Activated CD4-positive, alpha-beta T cell treated with anti-CD3 and anti-CD28 coated beads, Interleukin-2, amount 10 ng/mL, durations not matched to agents 24 days and 14 days (primary cell): ENCODE measurements at regions of chr9 and their contacts with region 1.

Region 1: DNA sequence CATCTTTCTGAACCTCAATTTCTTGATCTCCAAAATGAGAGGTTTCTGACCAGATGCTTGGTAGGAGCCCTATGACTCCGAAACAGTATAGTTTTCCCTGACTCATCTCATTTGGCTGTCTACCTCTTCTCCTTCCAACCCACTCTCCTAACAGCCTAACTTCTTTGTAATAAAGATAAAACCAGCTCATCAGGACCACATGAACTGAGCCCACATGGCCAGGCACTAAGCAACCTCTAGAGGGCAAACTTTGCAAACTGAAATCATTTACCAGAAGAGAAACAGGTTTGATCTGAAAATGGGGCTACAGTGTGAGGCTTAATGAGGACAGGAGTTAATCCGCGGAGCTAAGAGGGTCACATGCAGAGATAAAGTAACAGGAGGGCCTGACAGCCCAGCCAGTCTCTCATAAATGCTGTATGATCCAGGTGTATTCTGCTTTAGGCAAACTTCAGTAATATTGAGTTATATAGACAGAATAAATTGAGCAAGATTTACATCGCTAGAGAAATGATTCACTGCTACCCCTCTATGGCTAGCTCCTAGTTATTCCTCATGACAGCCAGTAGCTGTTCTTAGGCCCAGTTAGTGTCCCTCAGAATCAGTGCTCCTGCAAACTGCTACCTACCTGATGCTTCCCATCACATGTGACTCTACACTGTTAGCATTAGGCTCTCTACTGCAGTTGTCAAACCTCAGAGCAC is 64.6 kb downstream of the ABCA1 start:
- DNase-seq: peak; percentile 83
- H3K4me3 Mint-ChIP-seq: no peak overlapping the region
- H3K27ac Mint-ChIP-seq: no peak overlapping the region
- H3K4me1 Mint-ChIP-seq: peaks cover 4% of the 10 kb centered on the region
- H3K27me3 Mint-ChIP-seq: no peaks in the 10 kb centered on the region

Region 2: DNA sequence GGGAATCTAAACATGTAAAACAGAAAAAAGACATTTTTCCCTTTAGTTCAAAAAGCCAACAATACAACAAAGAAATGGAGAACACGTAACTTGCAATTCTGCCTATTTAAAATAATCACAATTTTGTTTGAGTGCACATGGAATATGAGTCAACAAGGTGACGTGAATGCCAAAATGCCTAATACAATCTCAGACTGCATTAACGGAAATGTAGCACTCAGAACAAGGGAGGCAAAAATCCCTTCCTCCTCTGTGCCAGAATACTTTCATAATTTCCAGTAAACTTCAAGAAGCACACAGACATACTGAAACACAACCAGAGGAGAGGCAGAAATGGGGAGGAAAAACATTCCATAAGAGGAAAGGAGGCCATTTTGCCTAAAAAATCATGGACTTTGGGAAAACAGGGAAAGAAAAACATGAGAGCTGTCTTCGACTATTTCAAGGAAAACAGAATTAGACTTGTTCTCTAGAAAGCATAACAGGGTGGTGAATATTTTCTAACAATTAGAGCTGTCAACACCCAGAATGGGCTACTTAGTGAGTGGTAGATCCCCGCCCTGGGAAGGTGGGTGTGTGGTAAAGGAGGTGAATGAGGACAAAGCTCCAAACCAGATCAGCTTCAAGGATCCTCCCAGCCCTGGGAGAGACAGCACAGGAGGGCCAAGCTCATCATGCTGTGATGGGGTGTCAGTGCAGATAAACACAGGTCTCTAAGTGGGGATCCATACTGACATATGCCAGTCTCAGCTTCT is 16.4 kb after region 1 on chr9:
- intact Hi-C with region 1: no loop called
- DNase-seq: no peak
- H3K4me3 Mint-ChIP-seq: no peak overlapping the region
- H3K27ac Mint-ChIP-seq: no peak overlapping the region
- H3K4me1 Mint-ChIP-seq: no peaks in the 10 kb centered on the region
- H3K27me3 Mint-ChIP-seq: no peaks in the 10 kb centered on the region

Region 3: DNA sequence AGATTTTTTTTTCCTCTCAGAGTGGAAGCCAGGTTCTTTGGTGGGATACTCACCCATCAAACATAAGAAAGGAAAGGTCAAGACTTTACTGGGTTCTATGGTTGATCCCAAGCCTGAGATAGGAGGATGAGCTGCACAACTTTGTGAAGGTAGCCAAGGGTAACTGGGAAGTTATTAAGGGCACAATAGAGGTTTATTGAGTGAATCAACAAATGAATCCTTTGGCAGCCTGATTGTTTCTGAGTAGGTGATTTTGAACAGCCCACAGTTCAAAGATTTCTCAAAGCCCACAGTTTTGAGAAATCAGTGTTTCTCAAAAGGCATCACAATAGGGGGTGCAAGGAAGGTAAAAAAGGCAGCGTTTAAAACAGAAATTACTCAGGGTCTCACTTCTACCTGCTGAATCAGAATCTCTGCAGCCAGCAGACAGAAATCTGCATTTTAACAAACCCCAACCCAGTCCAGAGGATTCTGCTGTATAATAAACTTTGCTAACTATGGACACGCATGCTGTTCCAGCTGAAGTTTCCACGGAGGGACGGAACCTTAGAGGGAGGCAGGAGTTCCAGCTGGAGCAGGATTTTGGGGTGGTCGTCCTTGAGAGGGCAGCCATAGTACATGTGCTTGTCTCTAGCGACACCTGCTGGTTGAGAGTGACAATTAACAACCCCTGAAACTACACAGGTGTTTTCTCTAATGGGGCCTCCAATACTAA is 551.8 kb after region 1 on chr9:
- intact Hi-C with region 1: loop called (anchors 1 kb)
- DNase-seq: peak; percentile 87
- H3K4me3 Mint-ChIP-seq: no peak overlapping the region
- H3K27ac Mint-ChIP-seq: no peak overlapping the region
- H3K4me1 Mint-ChIP-seq: peaks cover 11% of the 10 kb centered on the region
- H3K27me3 Mint-ChIP-seq: peaks cover 39% of the 10 kb centered on the region